ENCODE measurements at regions of chr9 and their contacts with region 1.

Region 1: GRCh38 chr9:98255578-98256296 is at the start of gene TBC1D2:
- DNase-seq: peak; percentile 97 to 98 (median 97)
- H3K4me3 ChIP-seq: peak within 1 kb of the TSS; percentile 99
- H3K4me3 Mint-ChIP-seq: peak within 1 kb of the TSS; percentile 84 to 98 (median 91)
- H3K27ac ChIP-seq: peak within 1 kb of the TSS; percentile 91
- H3K27ac Mint-ChIP-seq: peak within 1 kb of the TSS; percentile 87 to 98 (median 94)
- H3K4me1 ChIP-seq: peaks cover 22% of the 10 kb centered on the region
- H3K4me1 Mint-ChIP-seq: peaks cover 30 to 41% (median 38%) of the 10 kb centered on the region in 3 donors
- H3K27me3 ChIP-seq: no peaks in the 10 kb centered on the region
- H3K27me3 Mint-ChIP-seq: no peaks in the 10 kb centered on the region
- total RNA-seq, gene TBC1D2: 3.3 to 4.8 TPM

Region 2: GRCh38 chr9:97982683-97983588 is 272.8 kb before region 1 on chr9 and contains the start of gene ANP32B:
- CTCF ChIA-PET with region 1: interaction called, 12 read pairs
- POLR2A ChIA-PET with region 1: interaction called, 4 read pairs
- DNase-seq: peak; percentile 88 to 96 (median 93)
- H3K4me3 ChIP-seq: peak within 1 kb of the TSS; percentile 65
- H3K4me3 Mint-ChIP-seq: peak within 1 kb of the TSS; percentile 82 to 98 (median 90)
- H3K27ac ChIP-seq: peak within 1 kb of the TSS; percentile 83
- H3K27ac Mint-ChIP-seq: peak within 1 kb of the TSS; percentile 54 to 96 (median 84)
- H3K4me1 ChIP-seq: peaks cover 56% of the 10 kb centered on the region
- H3K4me1 Mint-ChIP-seq: peaks cover 29 to 39% (median 37%) of the 10 kb centered on the region in 3 donors
- H3K27me3 ChIP-seq: no peaks in the 10 kb centered on the region
- H3K27me3 Mint-ChIP-seq: no peaks in the 10 kb centered on the region
- total RNA-seq, gene ANP32B: 331 to 341 TPM

Region 3: GRCh38 chr9:98056269-98057137 is 199.2 kb before region 1 on chr9 and contains the start of gene NANS:
- CTCF ChIA-PET with region 1: interaction called, 5 read pairs
- POLR2A ChIA-PET with region 1: interaction called, 11 read pairs
- DNase-seq: peak; percentile 87 to 94 (median 88)
- H3K4me3 ChIP-seq: peak within 1 kb of the TSS; percentile 76
- H3K4me3 Mint-ChIP-seq: peak within 1 kb of the TSS; percentile 94 to 99 (median 96)
- H3K27ac ChIP-seq: peak within 1 kb of the TSS; percentile 72
- H3K27ac Mint-ChIP-seq: peak within 1 kb of the TSS; percentile 91 to 99 (median 96)
- H3K4me1 ChIP-seq: peaks cover 16% of the 10 kb centered on the region
- H3K4me1 Mint-ChIP-seq: peaks cover 18 to 32% (median 30%) of the 10 kb centered on the region in 3 donors
- H3K27me3 ChIP-seq: no peaks in the 10 kb centered on the region
- H3K27me3 Mint-ChIP-seq: no peaks in the 10 kb centered on the region
- total RNA-seq, gene NANS: 33.2 to 34.8 TPM

Region 4: GRCh38 chr9:98101868-98102273 is 153.9 kb before region 1 on chr9:
- CTCF ChIA-PET with region 1: interaction called, 9 read pairs
- POLR2A ChIA-PET with region 1: interaction called, 28 read pairs
- DNase-seq: peak; percentile 66 to 92 (median 90)
- H3K4me3 ChIP-seq: peak overlapping the region; percentile 23
- H3K4me3 Mint-ChIP-seq: peak overlapping the region; percentile 65 to 87 (median 78)
- H3K27ac ChIP-seq: no peak overlapping the region
- H3K27ac Mint-ChIP-seq: peak overlapping the region; percentile 93 to 99 (median 96)
- H3K4me1 ChIP-seq: peaks cover 95% of the 10 kb centered on the region
- H3K4me1 Mint-ChIP-seq: peaks cover 78 to 96% (median 95%) of the 10 kb centered on the region in 3 donors
- H3K27me3 ChIP-seq: no peaks in the 10 kb centered on the region
- H3K27me3 Mint-ChIP-seq: no peaks in the 10 kb centered on the region

Region 5: GRCh38 chr9:98192503-98193335 is 63.0 kb before region 1 on chr9 and contains the start of gene CORO2A:
- CTCF ChIA-PET with region 1: interaction called, 6 read pairs
- POLR2A ChIA-PET with region 1: interaction called, 19 read pairs
- DNase-seq: peak; percentile 58 to 78 (median 74)
- H3K4me3 ChIP-seq: peak within 1 kb of the TSS; percentile 71
- H3K4me3 Mint-ChIP-seq: peak within 1 kb of the TSS; percentile 85 to 91 (median 89)
- H3K27ac ChIP-seq: peak within 1 kb of the TSS; percentile 51
- H3K27ac Mint-ChIP-seq: peak within 1 kb of the TSS; percentile 59 to 91 (median 80)
- H3K4me1 ChIP-seq: peaks cover 31% of the 10 kb centered on the region
- H3K4me1 Mint-ChIP-seq: peaks cover 40 to 48% (median 44%) of the 10 kb centered on the region in 3 donors
- H3K27me3 ChIP-seq: no peaks in the 10 kb centered on the region
- H3K27me3 Mint-ChIP-seq: no peaks in the 10 kb centered on the region
- total RNA-seq, gene CORO2A: 5.1 TPM